ENCODE measurements at regions of chrX and their contacts with region 1.

Region 1: DNA sequence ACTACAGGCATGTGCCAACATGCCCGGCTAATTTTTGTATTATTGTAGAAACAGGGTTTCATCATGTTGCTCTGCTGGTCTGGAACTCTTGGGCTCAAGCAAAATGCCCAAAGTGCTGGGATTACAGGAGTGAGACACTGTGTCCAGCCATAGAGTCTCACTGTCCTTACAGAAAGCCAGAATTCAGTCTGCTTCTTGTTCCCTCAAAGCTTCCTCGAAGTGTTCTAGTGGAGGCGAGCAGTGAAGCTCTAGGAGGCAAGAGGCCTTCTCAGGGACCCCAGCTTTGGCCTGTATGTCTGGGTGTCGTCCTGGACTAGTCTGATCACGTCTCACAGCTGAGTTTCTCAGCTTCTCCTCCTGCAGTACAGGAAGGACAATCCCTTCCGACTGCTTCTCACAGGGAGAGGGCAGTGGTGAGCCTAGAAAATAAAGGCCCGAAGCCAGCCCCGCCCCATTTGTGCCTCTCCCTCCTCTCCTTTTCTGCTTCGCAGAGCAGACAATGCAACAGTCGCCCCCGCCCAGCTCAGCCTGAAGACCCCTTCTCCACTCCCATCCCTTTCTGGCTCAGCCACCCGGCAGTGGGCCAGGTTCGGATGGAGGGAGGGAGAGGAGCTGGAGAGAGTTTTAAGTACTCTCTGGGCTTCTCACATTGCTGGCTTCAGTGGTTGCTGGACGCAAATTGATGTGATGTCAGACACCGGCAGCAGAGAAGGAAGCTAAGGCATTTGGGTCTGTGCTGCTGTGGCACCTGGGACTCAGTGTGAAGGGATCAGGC is 11.1 kb upstream of the FAM3A start:
- DNase-seq: peak; percentile 69
- H3K4me3 ChIP-seq: peak overlapping the region in 1 of 3 experiments; percentile 15
- H3K27ac ChIP-seq: peak overlapping the region; percentile 65
- H3K4me1 ChIP-seq: peaks cover 18% of the 10 kb centered on the region
- H3K27me3 ChIP-seq: no peaks in the 10 kb centered on the region
- CTCF ChIP-seq: peak; percentile 47 to 64

Region 2: DNA sequence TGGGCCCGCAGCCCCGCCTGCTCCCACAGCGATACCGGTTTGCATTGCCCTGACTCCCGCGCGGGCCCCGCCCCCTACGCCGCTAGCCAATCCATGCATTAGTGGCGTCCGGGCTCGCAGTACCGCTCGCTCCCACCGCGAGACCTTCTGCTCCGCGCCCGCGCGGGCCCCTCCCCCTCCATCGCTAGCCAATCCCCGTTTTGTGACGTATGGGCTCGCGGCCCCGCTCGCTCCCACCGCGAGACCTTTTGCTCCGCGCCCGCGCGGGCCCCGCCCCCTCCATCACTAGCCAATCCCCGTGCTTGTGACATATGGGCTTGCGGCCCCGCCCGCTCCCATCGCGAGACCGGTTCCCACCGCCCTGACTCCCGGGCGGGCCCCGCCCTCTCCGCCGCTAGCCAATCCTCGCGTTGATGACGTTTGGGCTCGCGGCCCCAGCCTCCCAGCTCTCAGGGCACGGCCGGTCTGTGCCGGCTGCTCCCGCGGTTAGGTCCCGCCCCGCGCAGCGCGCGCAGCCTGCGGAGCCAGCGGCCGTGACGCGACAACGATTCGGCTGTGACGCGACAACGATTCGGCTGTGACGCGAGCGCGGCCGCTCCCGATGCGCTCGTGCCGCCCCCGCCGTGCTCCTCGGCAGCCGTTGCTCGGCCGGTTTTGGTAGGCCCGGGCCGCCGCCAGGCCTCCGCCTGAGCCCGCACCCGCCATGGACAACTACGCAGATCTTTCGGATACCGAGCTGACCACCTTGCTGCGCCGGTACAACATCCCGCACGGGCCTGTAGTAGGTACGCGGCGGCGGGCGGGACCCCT is 148.1 kb before region 1 on chrX and contains the start of gene EMD:
- CTCF ChIA-PET with region 1: no interaction called
- dilution Hi-C with region 1: no loop called
- in situ Hi-C with region 1: loop called in 1 of 2 experiments (anchors 10 kb)
- intact Hi-C with region 1: no loop called
- DNase-seq: peak; percentile 97
- H3K4me3 ChIP-seq: peak within 1 kb of the TSS; percentile 72 to 81 (median 76)
- H3K27ac ChIP-seq: peak within 1 kb of the TSS; percentile 95
- H3K4me1 ChIP-seq: peaks cover 25% of the 10 kb centered on the region
- H3K27me3 ChIP-seq: no peaks in the 10 kb centered on the region
- CTCF ChIP-seq: no peak
- total RNA-seq, gene EMD: 22.7 to 71.9 TPM

Region 3: DNA sequence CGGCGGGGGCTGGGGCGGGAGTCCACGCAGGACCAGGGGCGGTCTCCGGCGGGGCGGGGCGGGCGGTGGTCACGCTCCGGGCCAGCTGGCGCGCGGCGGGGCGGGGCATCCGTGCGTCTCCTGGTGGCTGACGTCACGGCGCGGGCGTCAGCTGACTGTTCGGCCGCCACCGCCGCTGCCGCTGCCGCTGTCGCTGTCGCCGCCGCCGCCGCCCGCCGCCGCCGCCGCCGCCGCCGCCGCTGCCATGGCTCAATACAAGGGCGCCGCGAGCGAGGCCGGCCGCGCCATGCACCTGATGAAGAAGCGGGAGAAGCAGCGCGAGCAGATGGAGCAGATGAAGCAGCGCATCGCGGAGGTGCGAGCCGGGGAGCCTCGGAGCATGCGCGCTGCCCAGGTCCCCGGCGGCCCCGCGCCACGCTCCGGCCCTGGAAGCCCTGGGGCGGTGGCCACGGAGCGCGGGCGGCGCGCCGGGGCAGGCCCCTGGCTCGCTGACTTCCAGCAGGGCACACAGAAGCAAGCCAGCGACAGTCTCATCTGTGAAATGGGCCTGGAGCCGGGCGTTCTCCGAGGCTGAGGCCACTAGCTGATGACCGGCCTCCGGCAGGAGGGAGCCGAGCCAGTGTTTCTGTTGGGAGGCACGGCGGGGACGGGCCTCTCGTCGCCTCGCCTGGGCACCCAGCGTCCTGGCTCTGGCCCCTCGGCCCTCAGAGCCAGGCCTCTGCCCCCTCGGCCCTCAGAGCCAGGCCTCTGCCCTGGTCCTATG is 82.9 kb before region 1 on chrX and contains the start of gene FAM50A:
- CTCF ChIA-PET with region 1: interaction called, 3 read pairs
- dilution Hi-C with region 1: loop called (anchors 5 kb)
- in situ Hi-C with region 1: no loop called
- intact Hi-C with region 1: no loop called
- DNase-seq: no peak
- H3K4me3 ChIP-seq: peak within 1 kb of the TSS; percentile 41 to 60 (median 57)
- H3K27ac ChIP-seq: no peak within 1 kb of the TSS
- H3K4me1 ChIP-seq: peaks cover 16% of the 10 kb centered on the region
- H3K27me3 ChIP-seq: no peaks in the 10 kb centered on the region
- CTCF ChIP-seq: no peak
- total RNA-seq, gene FAM50A: 15.8 to 50.7 TPM

Region 4: DNA sequence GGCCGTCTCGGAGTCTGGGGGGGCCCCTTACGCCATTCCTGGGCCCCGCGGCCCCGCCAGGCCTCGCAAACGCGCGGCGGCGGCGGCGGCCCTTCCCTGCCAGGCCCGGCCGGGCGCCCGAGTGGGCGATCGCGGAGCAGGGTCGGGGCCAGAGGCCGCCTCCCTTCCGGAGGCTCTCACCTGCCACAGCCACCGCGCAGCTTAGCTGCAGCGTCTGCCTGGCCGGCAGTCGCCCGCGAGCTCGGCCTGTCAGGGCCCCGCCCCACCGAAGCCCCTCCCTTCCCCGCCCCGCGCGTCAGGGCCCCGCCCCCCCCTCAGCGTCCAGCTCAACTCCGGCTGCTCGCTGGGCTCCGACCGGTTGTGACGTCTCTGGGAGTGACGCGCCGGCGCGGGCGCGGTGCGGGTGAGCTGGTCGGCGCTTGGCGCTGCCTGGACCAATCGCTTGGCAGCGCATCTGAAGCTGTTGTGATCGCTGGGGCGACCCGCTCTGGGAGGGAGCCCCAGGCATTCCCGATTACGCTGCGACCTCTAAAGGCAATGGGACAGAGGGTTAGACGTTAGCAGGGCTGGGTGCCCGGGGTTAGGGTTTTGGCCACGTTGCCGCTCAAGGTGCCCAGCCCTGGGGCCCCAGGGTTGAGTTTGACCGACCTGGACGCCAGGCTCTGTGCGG is 36.5 kb before region 1 on chrX and contains the start of gene SLC10A3:
- CTCF ChIA-PET with region 1: interaction called, 5 read pairs
- dilution Hi-C with region 1: no loop called
- in situ Hi-C with region 1: no loop called
- intact Hi-C with region 1: loop called (anchors 2 kb)
- DNase-seq: peak; percentile 88
- H3K4me3 ChIP-seq: peak within 1 kb of the TSS; percentile 64 to 69 (median 68)
- H3K27ac ChIP-seq: peak within 1 kb of the TSS; percentile 75
- H3K4me1 ChIP-seq: peaks cover 5% of the 10 kb centered on the region
- H3K27me3 ChIP-seq: no peaks in the 10 kb centered on the region
- CTCF ChIP-seq: no peak
- total RNA-seq, gene SLC10A3: 27.2 to 29.6 TPM